HepG2 (cell line): ENCODE measurements at regions of chr11 and their contacts with region 1.

Region 1: GRCh38 chr11:110305169-110306018 is 9.0 kb upstream of the RDX start:
- DNase-seq: peak; percentile 82
- ATAC-seq: no peak
- H3K4me3 ChIP-seq: no peak overlapping the region
- H3K27ac ChIP-seq: no peak overlapping the region
- H3K4me1 ChIP-seq: peaks cover 30% of the 10 kb centered on the region
- H3K27me3 ChIP-seq: no peaks in the 10 kb centered on the region
- CTCF ChIP-seq: no peak
- EP300 ChIP-seq: peak in 1 of 2 experiments; percentile 30; a peak in 1 of 4 replicates
- POLR2A ChIP-seq: no peak
- RAD21 ChIP-seq: no peak

Region 2: DNA sequence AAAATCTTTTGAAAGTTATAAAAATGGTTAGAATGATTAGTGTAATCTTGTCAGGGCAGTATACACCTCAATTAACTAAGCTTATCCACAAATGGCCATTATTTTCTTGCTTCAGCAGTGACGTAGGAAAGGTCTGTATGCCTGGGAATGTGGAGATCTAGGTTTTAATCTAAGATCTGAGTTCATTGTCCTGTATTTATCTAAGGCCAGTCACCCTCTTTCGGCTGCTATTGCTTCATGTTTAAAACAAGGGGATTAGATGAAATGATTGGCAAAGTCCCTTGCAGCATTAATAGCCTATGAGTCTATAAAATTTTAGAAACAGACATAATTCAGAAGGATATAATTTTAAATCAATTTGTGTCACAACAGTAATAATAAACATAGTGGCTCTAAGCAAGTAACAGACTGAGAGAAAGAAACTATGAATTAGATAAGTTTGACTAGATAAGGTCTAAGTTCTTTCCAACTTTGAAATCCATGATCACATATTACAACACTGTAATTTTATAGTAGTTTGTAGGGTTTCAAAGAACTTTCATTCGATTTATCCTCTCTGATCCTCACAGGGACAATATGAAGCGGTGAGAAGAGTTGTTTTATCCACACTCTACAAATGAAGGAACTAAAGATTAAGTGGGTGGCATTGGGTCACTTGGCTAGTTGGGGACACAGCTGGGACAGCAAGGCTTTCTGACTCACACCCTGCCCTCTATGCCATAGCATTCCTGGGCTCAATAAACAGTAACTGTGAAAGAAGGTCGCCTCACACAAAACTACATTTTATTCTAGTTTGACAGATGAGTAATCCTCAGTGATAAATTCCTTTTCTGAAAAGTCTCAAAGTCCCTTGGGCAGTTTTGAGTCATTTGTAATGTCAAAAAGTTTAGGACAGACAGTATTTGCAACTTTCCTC is 51.6 kb after region 1 on chr11:
- CTCF ChIA-PET with region 1: no interaction called
- POLR2A ChIA-PET with region 1: no interaction called
- in situ Hi-C with region 1: loop called (anchors 5 kb)
- intact Hi-C with region 1: no loop called
- DNase-seq: peak; percentile 84
- ATAC-seq: peak; percentile 91
- H3K4me3 ChIP-seq: no peak overlapping the region; a peak in 1 of 6 replicates
- H3K27ac ChIP-seq: peak overlapping the region; percentile 42
- H3K4me1 ChIP-seq: peaks cover 30% of the 10 kb centered on the region
- H3K27me3 ChIP-seq: no peaks in the 10 kb centered on the region; a peak in 1 of 5 replicates
- CTCF ChIP-seq: no peak
- EP300 ChIP-seq: peak in 1 of 2 experiments; percentile 6; a peak in 1 of 4 replicates
- POLR2A ChIP-seq: no peak
- RAD21 ChIP-seq: no peak